ENCODE measurements at regions of chr11 and their contacts with region 1.

Region 1: DNA sequence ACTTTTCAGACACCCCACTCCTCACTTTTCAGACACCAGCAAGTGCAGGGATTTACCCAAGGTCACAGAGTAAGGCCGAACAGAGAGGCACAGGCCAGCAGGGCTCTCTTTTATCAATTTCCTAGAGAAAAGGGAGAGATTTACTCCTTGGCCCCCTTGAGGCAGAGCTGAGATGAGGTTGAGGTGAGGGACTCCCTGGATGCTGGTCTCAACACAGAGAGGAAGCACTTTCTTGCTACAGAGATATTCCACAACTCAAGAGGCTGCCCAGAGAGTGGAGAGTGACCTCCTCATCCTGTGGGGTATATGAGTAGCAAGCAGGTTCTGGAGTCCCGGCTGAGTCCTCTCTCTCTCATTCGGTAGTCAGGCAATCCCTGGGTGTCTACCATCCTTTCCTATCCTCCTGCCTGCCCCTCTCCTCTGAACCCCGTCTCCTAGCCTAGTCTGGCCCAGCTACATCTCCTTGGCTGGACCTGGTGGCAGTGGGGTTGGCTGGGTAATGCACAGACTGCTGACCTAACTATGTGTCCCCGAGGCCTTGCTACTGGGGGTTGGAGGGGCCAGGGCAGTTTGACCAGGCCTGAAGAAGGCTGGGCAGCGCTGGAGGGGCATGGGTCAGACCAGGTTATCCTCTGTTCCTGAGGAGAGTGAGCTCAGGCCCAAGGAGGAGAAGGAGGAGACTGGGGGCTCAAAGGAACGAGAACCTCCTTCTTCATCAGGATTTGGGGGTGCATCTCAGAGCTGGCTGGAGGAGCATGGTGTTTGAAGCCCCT is 1.8 kb upstream of the ARHGEF17 start:
- DNase-seq: no peak

Region 2: GRCh38 chr11:73335204-73335923 is 29.1 kb after region 1 on chr11:
- intact Hi-C with region 1: loop called (anchors 1 kb)
- DNase-seq: peak in 41 of 42 donors; percentile 78 to 96 (median 89)

Region 3: GRCh38 chr11:73463359-73463758 is 157.1 kb after region 1 on chr11:
- intact Hi-C with region 1: no loop called
- DNase-seq: no peak